ENCODE measurements at regions of chr17 and their contacts with region 1.

Region 1: DNA sequence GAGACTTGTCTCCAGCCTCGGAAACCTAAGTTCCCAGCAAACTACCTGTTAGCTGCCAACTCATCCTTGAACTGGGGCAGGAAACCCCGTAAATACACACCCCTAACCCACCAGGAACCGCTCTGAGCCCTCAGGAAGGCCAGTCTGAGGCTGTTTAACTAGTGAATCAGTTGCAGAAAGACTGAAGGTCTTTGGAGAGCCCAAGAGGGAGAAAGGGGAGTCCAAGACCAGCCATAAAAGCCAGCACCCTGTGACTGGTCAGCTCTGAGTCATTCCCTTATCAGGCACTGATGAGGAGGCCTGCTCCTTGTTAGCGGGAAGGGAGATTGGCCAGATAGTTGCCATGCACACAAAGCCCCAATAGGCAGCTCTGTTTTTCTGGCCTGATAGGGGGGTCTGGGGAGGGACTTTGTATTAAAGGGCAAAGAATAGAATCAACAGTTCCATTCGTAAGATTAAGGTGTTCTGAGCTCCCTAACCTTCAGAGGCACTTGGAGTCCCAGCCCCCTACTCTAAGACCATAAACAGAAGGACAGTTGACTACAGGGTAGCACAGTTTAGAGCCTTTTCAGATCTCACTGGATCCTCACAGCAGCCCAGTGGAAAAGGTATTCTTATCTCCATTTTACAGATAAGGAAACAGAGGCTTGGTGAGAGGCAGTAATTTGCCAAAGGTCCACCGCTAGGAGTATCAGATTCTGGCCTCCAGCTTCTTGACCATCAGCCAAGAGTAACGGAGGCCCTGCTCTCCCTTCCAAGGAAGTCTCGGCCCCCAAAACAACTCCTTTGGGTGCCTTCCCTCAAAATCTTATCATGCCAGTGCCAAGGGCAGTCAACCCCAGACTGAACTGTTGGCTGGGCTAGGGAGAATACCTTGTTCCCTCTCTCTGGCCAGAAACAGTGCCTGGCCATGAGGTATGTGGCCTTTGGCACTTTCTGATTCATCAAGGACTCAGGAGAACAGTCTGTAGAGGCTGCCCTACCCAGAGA is 2.2 kb upstream of the KRT19 start:
- DNase-seq: peak; percentile 86 to 99
- H3K4me3 ChIP-seq: peak overlapping the region; percentile 93
- H3K27ac ChIP-seq: peak overlapping the region; percentile 95
- H3K4me1 ChIP-seq: peaks cover 66% of the 10 kb centered on the region
- H3K27me3 ChIP-seq: no peaks in the 10 kb centered on the region
- CTCF ChIP-seq: no peak

Region 2: DNA sequence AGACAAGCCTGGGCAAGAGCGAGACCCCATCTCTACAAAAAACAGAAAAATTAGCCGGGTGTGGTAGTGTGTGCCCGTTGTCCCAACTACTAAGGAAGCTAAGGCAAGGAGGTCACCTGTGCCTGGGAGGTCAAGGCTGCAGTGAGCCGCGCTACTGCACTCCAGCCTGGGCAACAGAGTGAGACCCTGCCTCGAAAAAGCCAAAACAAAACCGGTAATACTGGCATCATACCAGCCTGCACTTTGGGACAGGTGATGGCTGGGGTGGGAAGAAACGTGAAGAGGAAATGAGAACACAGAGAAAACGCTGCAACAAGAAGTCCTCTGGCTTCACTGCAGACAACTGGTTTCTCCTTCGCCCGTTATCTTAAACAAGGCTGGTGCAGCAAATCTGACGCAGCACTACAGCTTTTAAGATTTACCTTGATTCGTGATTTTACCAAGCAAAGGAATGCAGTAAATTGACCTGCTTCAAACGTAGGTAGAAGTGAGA is 1390.7 kb before region 1 on chr17:
- CTCF ChIA-PET with region 1: no interaction called
- POLR2A ChIA-PET with region 1: interaction called, 10 read pairs
- intact Hi-C with region 1: no loop called
- DNase-seq: no peak
- H3K4me3 ChIP-seq: peak overlapping the region; percentile 80
- H3K27ac ChIP-seq: peak overlapping the region; percentile 80
- H3K4me1 ChIP-seq: peaks cover 17% of the 10 kb centered on the region
- H3K27me3 ChIP-seq: no peaks in the 10 kb centered on the region
- CTCF ChIP-seq: no peak

Region 3: DNA sequence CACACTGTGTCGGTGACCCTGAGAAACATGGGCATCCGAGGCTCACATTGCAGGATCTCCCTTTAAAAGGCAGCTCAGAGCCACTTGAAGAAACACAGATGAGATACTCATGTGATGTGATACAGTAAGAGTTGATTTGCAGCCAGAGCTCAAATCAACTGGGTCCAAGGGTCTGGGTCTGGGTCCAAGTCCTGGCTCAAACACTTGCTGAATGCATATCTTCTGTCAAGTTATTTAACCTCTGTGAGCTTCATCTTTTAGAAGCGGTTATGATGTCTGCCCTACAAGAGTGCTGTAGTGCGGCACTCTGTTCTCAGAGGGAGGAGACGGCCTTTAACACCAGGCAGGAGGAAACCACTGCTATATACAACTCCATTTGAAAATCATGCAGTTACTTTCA is 95.9 kb before region 1 on chr17:
- CTCF ChIA-PET with region 1: no interaction called
- POLR2A ChIA-PET with region 1: no interaction called
- intact Hi-C with region 1: no loop called
- DNase-seq: no peak
- H3K4me3 ChIP-seq: no peak overlapping the region
- H3K27ac ChIP-seq: no peak overlapping the region
- H3K4me1 ChIP-seq: 0 out of 2 replicates have a peak, but pooled peaks cover 5% of the 10 kb centered on the region
- H3K27me3 ChIP-seq: no peaks in the 10 kb centered on the region
- CTCF ChIP-seq: no peak

Region 4: GRCh38 chr17:41505809-41506731 is 24.3 kb before region 1 on chr17:
- CTCF ChIA-PET with region 1: no interaction called
- POLR2A ChIA-PET with region 1: interaction called, 25 read pairs
- intact Hi-C with region 1: no loop called
- DNase-seq: peak in 1 of 2 experiments; percentile 59
- H3K4me3 ChIP-seq: peak overlapping the region; percentile 58; the same call in 1 of the 2 replicates
- H3K27ac ChIP-seq: peak overlapping the region; percentile 94
- H3K4me1 ChIP-seq: peaks cover 84% of the 10 kb centered on the region
- H3K27me3 ChIP-seq: no peaks in the 10 kb centered on the region
- CTCF ChIP-seq: no peak

Region 5: GRCh38 chr17:41786227-41787020 is 256.1 kb after region 1 on chr17 and contains the start of gene JUP:
- CTCF ChIA-PET with region 1: no interaction called
- POLR2A ChIA-PET with region 1: interaction called, 10 read pairs
- intact Hi-C with region 1: no loop called
- DNase-seq: peak; percentile 100
- H3K4me3 ChIP-seq: peak within 1 kb of the TSS; percentile 63
- H3K27ac ChIP-seq: peak within 1 kb of the TSS; percentile 98
- H3K4me1 ChIP-seq: peaks cover 39% of the 10 kb centered on the region
- H3K27me3 ChIP-seq: no peaks in the 10 kb centered on the region
- CTCF ChIP-seq: peak; percentile 77
- total RNA-seq, gene JUP: 259 TPM in 2 replicates